ENCODE measurements at regions of chr22 and their contacts with region 1.

Region 1: GRCh38 chr22:33529424-33530113 is 390.7 kb downstream of the LARGE1 start:
- DNase-seq: no peak
- H3K4me3 ChIP-seq: no peak overlapping the region
- H3K27ac ChIP-seq: no peak overlapping the region
- H3K4me1 ChIP-seq: no peaks in the 10 kb centered on the region
- H3K27me3 ChIP-seq: no peaks in the 10 kb centered on the region
- CTCF ChIP-seq: no peak
- EP300 ChIP-seq: no peak
- POLR2A ChIP-seq: no peak

Region 2: DNA sequence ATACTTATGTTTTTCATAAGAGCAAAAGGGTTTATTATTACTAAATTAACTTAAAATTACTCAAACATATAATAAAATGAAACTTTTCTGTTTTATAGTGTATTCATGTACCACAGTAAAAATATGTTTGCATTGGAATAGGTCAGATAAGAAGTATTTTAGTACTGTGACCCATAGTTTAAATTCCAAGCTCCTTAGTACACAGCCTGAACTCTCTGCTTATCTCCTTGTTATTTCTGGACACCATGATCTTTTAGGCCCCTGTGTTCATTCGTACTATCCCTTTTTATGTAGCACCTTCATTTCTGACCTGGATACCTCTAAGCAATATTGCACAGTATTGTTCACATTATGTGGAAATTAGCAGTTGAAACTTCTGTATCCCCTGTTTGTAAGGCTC is 174.6 kb before region 1 on chr22:
- intact Hi-C with region 1: no loop called
- DNase-seq: no peak
- H3K4me3 ChIP-seq: no peak overlapping the region
- H3K27ac ChIP-seq: no peak overlapping the region
- H3K4me1 ChIP-seq: no peaks in the 10 kb centered on the region
- H3K27me3 ChIP-seq: no peaks in the 10 kb centered on the region
- CTCF ChIP-seq: no peak
- EP300 ChIP-seq: no peak
- POLR2A ChIP-seq: no peak

Region 3: DNA sequence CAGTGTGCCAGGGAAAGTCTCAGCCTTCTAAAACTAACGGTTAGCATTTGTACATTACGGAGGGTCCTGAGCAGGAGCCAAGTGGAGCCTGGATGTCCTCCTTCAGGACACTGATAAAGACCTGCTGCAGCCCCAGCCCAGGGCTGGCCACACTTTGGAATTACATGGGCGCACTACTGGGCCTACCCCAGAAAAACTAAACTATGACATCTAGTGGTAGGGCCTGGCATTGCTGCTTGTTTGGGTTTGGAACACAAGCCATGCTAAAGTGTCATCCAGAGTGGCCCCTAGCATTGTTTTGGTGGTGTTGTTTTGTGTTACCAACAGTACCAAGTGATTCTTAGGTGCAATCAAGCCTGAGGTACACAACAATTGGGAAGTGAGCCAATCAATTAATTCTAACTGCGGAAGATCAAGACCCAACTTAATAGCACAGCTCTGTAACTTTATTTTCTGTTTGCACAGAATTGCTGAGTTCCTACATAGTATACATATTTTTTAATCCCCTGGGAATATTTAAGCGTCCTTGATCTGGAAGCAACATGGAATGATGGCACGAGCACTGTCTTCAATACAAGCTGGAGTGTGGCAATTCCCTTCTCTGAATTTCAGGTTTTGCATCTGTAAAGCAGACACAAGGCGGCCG is 50.0 kb after region 1 on chr22:
- intact Hi-C with region 1: loop called in 1 of 4 experiments (anchors 10 kb)
- DNase-seq: peak in 3 of 5 donors; percentile 18 to 35 (median 33)
- H3K4me3 ChIP-seq: no peak overlapping the region
- H3K27ac ChIP-seq: no peak overlapping the region
- H3K4me1 ChIP-seq: peaks cover 2% of the 10 kb centered on the region
- H3K27me3 ChIP-seq: no peaks in the 10 kb centered on the region
- CTCF ChIP-seq: peak in 2 of 3 donors; percentile 33 to 36
- EP300 ChIP-seq: no peak
- POLR2A ChIP-seq: no peak

Region 4: GRCh38 chr22:34111210-34111824 is 581.7 kb after region 1 on chr22:
- intact Hi-C with region 1: loop called in 1 of 4 experiments (anchors 5 kb)
- DNase-seq: peak; percentile 13 to 39 (median 27)
- H3K4me3 ChIP-seq: no peak overlapping the region
- H3K27ac ChIP-seq: no peak overlapping the region
- H3K4me1 ChIP-seq: no peaks in the 10 kb centered on the region
- H3K27me3 ChIP-seq: no peaks in the 10 kb centered on the region
- CTCF ChIP-seq: peak in 2 of 3 donors; percentile 22 to 34
- EP300 ChIP-seq: no peak
- POLR2A ChIP-seq: no peak

Measured in ovary (tissue), 10 donors.